Endothelial cell of umbilical vein (primary cell): ENCODE measurements at regions of chr20 and their contacts with region 1.

Region 1: GRCh38 chr20:10219452-10219791 is 792 bp downstream of the SNAP25 start:
- DNase-seq: peak; percentile 78
- H3K4me3 ChIP-seq: peak overlapping the region in 2 of 3 experiments; percentile 26 to 75
- H3K27ac ChIP-seq: no peak overlapping the region
- H3K4me1 ChIP-seq: peaks cover 4% of the 10 kb centered on the region
- H3K27me3 ChIP-seq: peaks cover 24 to 36% of the 10 kb centered on the region in 2 experiments
- CTCF ChIP-seq: peak in 1 of 2 donors; percentile 3
- POLR2A ChIP-seq: no peak

Region 2: GRCh38 chr20:9668381-9668780 is 551.0 kb before region 1 on chr20:
- CTCF ChIA-PET with region 1: no interaction called
- POLR2A ChIA-PET with region 1: no interaction called
- dilution Hi-C with region 1: no loop called
- intact Hi-C with region 1: no loop called
- DNase-seq: no peak
- H3K4me3 ChIP-seq: no peak overlapping the region
- H3K27ac ChIP-seq: no peak overlapping the region
- H3K4me1 ChIP-seq: no peaks in the 10 kb centered on the region
- H3K27me3 ChIP-seq: no peaks in the 10 kb centered on the region
- CTCF ChIP-seq: no peak
- POLR2A ChIP-seq: no peak

Region 3: DNA sequence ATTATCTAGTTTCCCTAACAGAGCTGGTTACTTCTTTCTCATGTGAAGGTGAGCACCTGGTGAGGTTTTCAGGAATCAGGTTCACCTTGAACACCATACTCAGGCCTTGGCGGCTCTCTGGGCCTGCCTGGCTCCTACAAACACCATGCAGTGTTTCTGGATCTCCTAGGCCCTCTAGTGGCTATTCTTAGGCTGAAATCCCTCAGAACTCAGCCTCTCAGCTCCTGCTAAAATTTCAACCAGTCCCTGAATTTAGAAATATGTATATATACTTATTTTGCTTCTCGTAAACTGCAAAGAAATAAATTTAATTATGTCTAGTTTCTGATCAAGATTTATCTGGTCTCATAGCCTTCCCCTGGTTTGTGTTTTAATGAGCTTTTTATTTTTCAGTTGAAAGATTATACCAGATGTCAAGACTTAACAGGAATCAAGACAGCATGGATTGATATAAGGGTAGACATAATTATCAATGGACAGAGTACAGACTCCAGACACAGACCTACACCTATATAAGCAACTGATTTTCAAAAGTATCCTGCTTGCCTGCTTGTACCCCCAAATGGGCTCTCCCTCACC is 128.7 kb before region 1 on chr20:
- CTCF ChIA-PET with region 1: interaction called, 10 read pairs
- POLR2A ChIA-PET with region 1: no interaction called
- dilution Hi-C with region 1: no loop called
- intact Hi-C with region 1: loop called (anchors 5 kb)
- DNase-seq: peak; percentile 67
- H3K4me3 ChIP-seq: no peak overlapping the region
- H3K27ac ChIP-seq: no peak overlapping the region
- H3K4me1 ChIP-seq: no peaks in the 10 kb centered on the region
- H3K27me3 ChIP-seq: no peaks in the 10 kb centered on the region
- CTCF ChIP-seq: peak; percentile 69 to 78
- POLR2A ChIP-seq: no peak

Region 4: GRCh38 chr20:10306440-10307358 is 87.3 kb after region 1 on chr20:
- CTCF ChIA-PET with region 1: no interaction called
- POLR2A ChIA-PET with region 1: no interaction called
- dilution Hi-C with region 1: no loop called
- intact Hi-C with region 1: loop called (anchors 2 kb)
- DNase-seq: peak; percentile 68
- H3K4me3 ChIP-seq: no peak overlapping the region
- H3K27ac ChIP-seq: peak overlapping the region; percentile 87
- H3K4me1 ChIP-seq: peaks cover 38% of the 10 kb centered on the region
- H3K27me3 ChIP-seq: no peaks in the 10 kb centered on the region
- CTCF ChIP-seq: no peak
- POLR2A ChIP-seq: peak; percentile 64

Region 5: DNA sequence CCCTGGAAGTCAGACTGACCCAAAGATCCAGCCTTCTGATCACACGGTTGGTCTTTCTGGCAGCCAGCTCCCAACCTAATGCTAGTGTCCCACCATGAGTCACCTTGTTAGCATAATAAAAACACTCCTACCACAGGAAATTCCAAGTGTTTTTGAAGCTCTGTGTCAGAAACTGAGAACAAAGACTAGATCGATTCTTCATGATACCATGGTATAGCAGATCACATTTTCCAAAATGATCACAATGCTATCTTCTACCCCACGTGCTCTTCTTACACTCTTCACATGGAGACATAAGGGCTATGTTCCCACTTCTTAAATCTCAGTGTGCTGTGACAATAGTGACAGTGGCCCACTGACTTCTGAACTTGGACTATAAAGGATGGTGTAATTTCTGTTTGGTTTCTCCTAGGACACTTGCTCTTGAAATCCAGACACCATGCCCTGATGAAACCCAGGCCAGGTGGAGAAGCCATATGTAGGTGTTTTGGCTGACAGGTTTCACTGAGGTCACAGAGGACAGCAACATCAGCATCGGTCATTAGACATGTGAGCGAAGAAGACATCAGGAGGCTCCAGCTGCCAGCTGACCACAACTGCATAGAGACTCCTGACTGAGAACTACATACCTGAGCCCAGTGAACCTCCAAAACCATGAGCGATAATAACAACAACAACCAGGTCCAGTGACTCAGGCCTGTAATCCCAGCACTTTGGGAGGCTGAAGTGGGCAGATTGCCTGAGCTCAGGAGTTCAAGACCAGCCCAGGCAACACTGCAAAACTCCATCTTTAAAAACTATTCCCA is 157.1 kb after region 1 on chr20:
- CTCF ChIA-PET with region 1: no interaction called
- POLR2A ChIA-PET with region 1: no interaction called
- dilution Hi-C with region 1: no loop called
- intact Hi-C with region 1: loop called (anchors 1 kb)
- DNase-seq: peak; percentile 84
- H3K4me3 ChIP-seq: no peak overlapping the region
- H3K27ac ChIP-seq: peak overlapping the region; percentile 74
- H3K4me1 ChIP-seq: peaks cover 17% of the 10 kb centered on the region
- H3K27me3 ChIP-seq: no peaks in the 10 kb centered on the region
- CTCF ChIP-seq: no peak
- POLR2A ChIP-seq: peak; percentile 26

Region 6: GRCh38 chr20:10427060-10427692 is 207.8 kb after region 1 on chr20:
- CTCF ChIA-PET with region 1: no interaction called
- POLR2A ChIA-PET with region 1: no interaction called
- dilution Hi-C with region 1: no loop called
- intact Hi-C with region 1: loop called (anchors 2 kb)
- DNase-seq: peak; percentile 79
- H3K4me3 ChIP-seq: no peak overlapping the region
- H3K27ac ChIP-seq: no peak overlapping the region
- H3K4me1 ChIP-seq: peaks cover 8% of the 10 kb centered on the region
- H3K27me3 ChIP-seq: no peaks in the 10 kb centered on the region
- CTCF ChIP-seq: peak; percentile 66 to 79
- POLR2A ChIP-seq: no peak

Region 7: DNA sequence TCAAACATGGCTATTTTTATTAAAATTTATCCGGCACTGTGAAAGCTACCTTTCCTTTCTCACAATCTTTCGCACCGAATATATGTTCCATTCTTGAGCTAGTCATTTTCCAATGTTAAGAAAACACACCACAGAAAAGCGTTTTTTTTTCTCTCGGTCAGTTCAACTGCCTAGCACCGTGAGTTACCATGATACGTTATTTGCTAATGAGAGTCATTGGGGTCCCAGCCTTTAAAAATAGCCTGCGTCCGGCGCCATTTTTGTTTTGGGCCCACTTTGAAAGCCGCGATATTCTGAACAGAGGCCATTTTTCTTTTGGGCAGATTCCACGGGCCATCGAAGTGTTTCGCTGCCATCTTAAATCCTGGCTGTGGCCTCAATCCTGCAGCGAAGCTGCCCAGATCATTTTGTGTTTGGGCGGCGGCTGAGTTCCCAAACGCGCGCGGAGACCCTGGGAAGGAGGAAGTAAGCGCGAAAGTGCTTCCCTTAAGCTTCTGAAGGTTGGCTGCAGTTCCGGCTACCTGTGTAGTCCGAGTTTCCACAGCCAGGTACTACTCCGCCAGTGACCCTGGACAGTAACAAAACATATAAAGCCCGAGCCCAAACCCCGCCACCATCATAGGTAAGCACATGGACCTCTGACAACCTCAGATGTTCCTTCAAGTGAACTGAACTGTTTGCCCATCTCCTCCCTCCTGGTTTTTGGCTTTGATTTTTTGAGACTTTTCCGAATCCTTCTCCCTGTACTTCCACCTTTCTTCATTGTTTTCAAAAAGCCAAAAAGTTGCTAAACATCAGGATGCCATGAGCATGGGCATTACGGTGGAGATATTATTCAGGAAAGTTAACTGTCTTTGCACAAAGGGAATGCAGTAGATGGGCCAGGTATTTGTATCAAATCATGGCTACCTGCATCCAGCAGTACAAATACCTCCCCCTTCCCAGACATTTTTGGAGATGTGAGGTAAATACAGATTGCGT is 215.7 kb after region 1 on chr20 and contains the start of gene SLX4IP:
- CTCF ChIA-PET with region 1: interaction called, 4 read pairs
- POLR2A ChIA-PET with region 1: interaction called, 10 read pairs
- dilution Hi-C with region 1: no loop called
- intact Hi-C with region 1: loop called (anchors 2 kb)
- DNase-seq: peak; percentile 95
- H3K4me3 ChIP-seq: peak within 1 kb of the TSS; percentile 96 to 99 (median 97)
- H3K27ac ChIP-seq: peak within 1 kb of the TSS; percentile 97
- H3K4me1 ChIP-seq: peaks cover 15% of the 10 kb centered on the region
- H3K27me3 ChIP-seq: no peaks in the 10 kb centered on the region
- CTCF ChIP-seq: no peak
- POLR2A ChIP-seq: peak; percentile 63
- total RNA-seq, gene SLX4IP: 4.1 and 4.5 TPM in 2 replicates

Region 8: GRCh38 chr20:10521068-10521831 is 301.8 kb after region 1 on chr20:
- CTCF ChIA-PET with region 1: no interaction called
- POLR2A ChIA-PET with region 1: no interaction called
- dilution Hi-C with region 1: no loop called
- intact Hi-C with region 1: loop called (anchors 10 kb)
- DNase-seq: peak; percentile 77
- H3K4me3 ChIP-seq: no peak overlapping the region
- H3K27ac ChIP-seq: peak overlapping the region; percentile 8
- H3K4me1 ChIP-seq: peaks cover 28% of the 10 kb centered on the region
- H3K27me3 ChIP-seq: no peaks in the 10 kb centered on the region
- CTCF ChIP-seq: no peak
- POLR2A ChIP-seq: no peak